Mammary epithelial cell (primary cell): ENCODE measurements at regions of chr19 and their contacts with region 1.

Region 1: GRCh38 chr19:46355234-46356148 is 8.6 kb downstream of the PPP5C start:
- DNase-seq: no peak
- H3K4me3 ChIP-seq: no peak overlapping the region
- H3K27ac ChIP-seq: no peak overlapping the region
- H3K4me1 ChIP-seq: peaks cover 19% of the 10 kb centered on the region
- H3K27me3 ChIP-seq: no peaks in the 10 kb centered on the region
- CTCF ChIP-seq: no peak

Region 2: GRCh38 chr19:46251412-46251811 is 104.1 kb before region 1 on chr19:
- CTCF ChIA-PET with region 1: no interaction called
- dilution Hi-C with region 1: no loop called
- in situ Hi-C with region 1: no loop called
- intact Hi-C with region 1: no loop called
- DNase-seq: peak; percentile 45
- H3K4me3 ChIP-seq: no peak overlapping the region
- H3K27ac ChIP-seq: no peak overlapping the region
- H3K4me1 ChIP-seq: no peaks in the 10 kb centered on the region
- H3K27me3 ChIP-seq: peaks cover 8% of the 10 kb centered on the region
- CTCF ChIP-seq: no peak

Region 3: DNA sequence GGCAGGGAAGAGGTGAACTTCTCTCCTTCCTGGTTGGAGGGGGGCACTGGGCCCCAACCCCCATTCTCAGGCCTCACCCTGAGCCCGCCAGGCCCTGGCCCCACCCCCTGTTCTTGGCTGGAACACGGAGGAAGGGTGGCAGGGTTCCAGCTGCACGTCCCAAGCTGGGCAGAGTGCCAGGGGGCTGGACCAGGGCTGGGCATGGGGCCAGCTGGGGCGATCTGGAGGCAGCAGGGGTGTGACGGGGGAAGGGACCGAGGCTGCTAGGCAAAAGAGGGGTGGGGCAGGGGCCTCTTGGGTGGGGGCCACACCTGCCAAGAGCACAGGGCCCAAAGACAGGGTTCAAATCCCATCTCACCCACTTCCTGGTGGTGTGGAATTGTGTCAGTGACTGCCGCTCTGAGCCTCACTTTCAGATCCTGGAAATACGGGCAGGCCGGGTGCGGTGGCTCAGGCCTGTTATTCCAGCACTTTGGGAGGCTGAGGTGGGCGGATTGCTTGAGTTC is 56.4 kb before region 1 on chr19:
- CTCF ChIA-PET with region 1: no interaction called
- dilution Hi-C with region 1: loop called (anchors 5 kb)
- in situ Hi-C with region 1: no loop called
- intact Hi-C with region 1: no loop called
- DNase-seq: peak; percentile 71
- H3K4me3 ChIP-seq: no peak overlapping the region
- H3K27ac ChIP-seq: no peak overlapping the region
- H3K4me1 ChIP-seq: peaks cover 29% of the 10 kb centered on the region
- H3K27me3 ChIP-seq: no peaks in the 10 kb centered on the region
- CTCF ChIP-seq: no peak

Region 4: DNA sequence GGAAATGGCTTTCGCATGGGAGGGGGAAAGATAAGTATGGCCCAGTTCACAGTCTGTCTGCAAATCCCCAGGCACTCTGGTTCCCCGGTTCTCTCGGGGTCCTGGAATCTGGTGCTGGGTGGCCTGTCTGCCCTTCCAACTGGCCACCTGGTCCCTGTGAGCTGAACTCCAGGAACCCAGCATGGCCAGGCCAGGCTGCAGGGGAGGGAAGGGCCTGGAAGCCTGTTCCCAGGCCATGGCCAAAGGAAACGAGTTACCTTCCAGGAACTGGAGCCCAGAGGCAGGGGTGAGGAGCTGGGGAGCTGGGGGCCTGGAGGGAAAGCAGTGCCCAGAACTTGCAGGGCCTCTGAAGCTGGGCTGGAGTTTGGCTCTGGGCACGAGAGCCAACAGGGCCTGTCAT is 92.3 kb after region 1 on chr19:
- CTCF ChIA-PET with region 1: no interaction called
- dilution Hi-C with region 1: loop called (anchors 5 kb)
- in situ Hi-C with region 1: no loop called
- intact Hi-C with region 1: no loop called
- DNase-seq: no peak
- H3K4me3 ChIP-seq: no peak overlapping the region
- H3K27ac ChIP-seq: no peak overlapping the region
- H3K4me1 ChIP-seq: peaks cover 26% of the 10 kb centered on the region
- H3K27me3 ChIP-seq: no peaks in the 10 kb centered on the region
- CTCF ChIP-seq: no peak